Vagina (tissue), 2 donors: ENCODE measurements at regions of chr5 and their contacts with region 1.

Region 1: GRCh38 chr5:109329333-109330237 is 80.2 kb downstream of the PJA2 start:
- DNase-seq: no peak
- H3K4me3 ChIP-seq: no peak overlapping the region
- H3K27ac ChIP-seq: no peak overlapping the region
- H3K4me1 ChIP-seq: peaks cover 16% of the 10 kb centered on the region
- H3K27me3 ChIP-seq: no peaks in the 10 kb centered on the region
- CTCF ChIP-seq: no peak
- POLR2A ChIP-seq: no peak

Region 2: GRCh38 chr5:109218818-109219217 is 110.8 kb before region 1 on chr5:
- intact Hi-C with region 1: no loop called
- DNase-seq: no peak
- H3K4me3 ChIP-seq: no peak overlapping the region
- H3K27ac ChIP-seq: no peak overlapping the region
- H3K4me1 ChIP-seq: no peaks in the 10 kb centered on the region
- H3K27me3 ChIP-seq: no peaks in the 10 kb centered on the region
- CTCF ChIP-seq: no peak
- POLR2A ChIP-seq: no peak

Region 3: DNA sequence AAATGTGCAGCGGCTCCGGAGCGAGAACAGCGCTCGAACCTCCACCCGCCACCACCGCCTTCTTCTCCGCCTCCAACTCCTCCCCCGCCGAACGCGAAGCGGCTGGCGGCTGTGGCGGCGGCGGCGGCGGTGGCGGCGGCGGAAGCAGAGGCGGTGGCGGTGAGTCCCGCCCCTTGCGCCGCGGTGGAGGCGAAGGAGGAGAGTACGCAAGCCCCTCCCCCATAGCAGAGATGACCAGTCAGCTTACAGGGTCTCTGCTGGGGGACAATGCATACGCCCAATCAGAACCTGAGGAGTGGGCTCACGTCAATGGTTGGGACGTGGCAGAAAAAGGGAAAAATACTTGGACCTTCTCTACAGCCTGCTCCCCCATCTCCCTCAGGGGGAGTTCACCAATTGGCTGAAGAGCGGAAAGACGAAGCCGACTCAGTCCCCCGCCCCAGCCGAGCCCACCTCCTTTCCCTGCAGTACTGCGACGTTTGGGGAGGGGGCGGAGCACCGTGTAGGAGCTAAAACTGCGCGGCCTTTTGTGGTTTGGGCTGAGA is 80.3 kb after region 1 on chr5 and contains the start of gene PJA2:
- intact Hi-C with region 1: loop called (anchors 5 kb)
- DNase-seq: peak; percentile 97 to 100
- H3K4me3 ChIP-seq: peak within 1 kb of the TSS; percentile 89 to 97
- H3K27ac ChIP-seq: peak within 1 kb of the TSS; percentile 99
- H3K4me1 ChIP-seq: peaks cover 56% of the 10 kb centered on the region
- H3K27me3 ChIP-seq: no peaks in the 10 kb centered on the region
- CTCF ChIP-seq: peak in 1 of 3 experiments; percentile 44
- POLR2A ChIP-seq: peak in 1 of 2 donors; percentile 88
- total RNA-seq, gene PJA2: 76.1 TPM